Activated CD8-positive, alpha-beta memory T cell treated with anti-CD3 and anti-CD28 coated beads, Interleukin-2, amount 10 ng/mL, durations not matched to agents 7 days and 5 days (primary cell): ENCODE measurements at regions of chr3 and their contacts with region 1.

Region 1: GRCh38 chr3:18740631-18741583 is 315.8 kb upstream of the SATB1 start:
- DNase-seq: peak; percentile 81
- ATAC-seq: peak; percentile 64
- H3K4me3 Mint-ChIP-seq: peak overlapping the region; percentile 70
- H3K27ac Mint-ChIP-seq: peak overlapping the region; percentile 98
- H3K4me1 Mint-ChIP-seq: peaks cover 88% of the 10 kb centered on the region
- H3K27me3 Mint-ChIP-seq: no peaks in the 10 kb centered on the region

Region 2: GRCh38 chr3:18717598-18717997 is 23.3 kb before region 1 on chr3:
- CTCF ChIA-PET with region 1: interaction called, 56 read pairs
- DNase-seq: no peak
- ATAC-seq: peak; percentile 31
- H3K4me3 Mint-ChIP-seq: peak overlapping the region; percentile 24
- H3K27ac Mint-ChIP-seq: peak overlapping the region; percentile 97
- H3K4me1 Mint-ChIP-seq: peaks cover 74% of the 10 kb centered on the region
- H3K27me3 Mint-ChIP-seq: no peaks in the 10 kb centered on the region

Region 3: GRCh38 chr3:18725668-18726407 is 15.1 kb before region 1 on chr3:
- CTCF ChIA-PET with region 1: interaction called, 15 read pairs
- DNase-seq: peak; percentile 63
- ATAC-seq: peak; percentile 68
- H3K4me3 Mint-ChIP-seq: peak overlapping the region; percentile 60
- H3K27ac Mint-ChIP-seq: peak overlapping the region; percentile 89
- H3K4me1 Mint-ChIP-seq: peaks cover 69% of the 10 kb centered on the region
- H3K27me3 Mint-ChIP-seq: no peaks in the 10 kb centered on the region